Endothelial cell of umbilical vein (primary cell): ENCODE measurements at regions of chr9 and their contacts with region 1.

Region 1: DNA sequence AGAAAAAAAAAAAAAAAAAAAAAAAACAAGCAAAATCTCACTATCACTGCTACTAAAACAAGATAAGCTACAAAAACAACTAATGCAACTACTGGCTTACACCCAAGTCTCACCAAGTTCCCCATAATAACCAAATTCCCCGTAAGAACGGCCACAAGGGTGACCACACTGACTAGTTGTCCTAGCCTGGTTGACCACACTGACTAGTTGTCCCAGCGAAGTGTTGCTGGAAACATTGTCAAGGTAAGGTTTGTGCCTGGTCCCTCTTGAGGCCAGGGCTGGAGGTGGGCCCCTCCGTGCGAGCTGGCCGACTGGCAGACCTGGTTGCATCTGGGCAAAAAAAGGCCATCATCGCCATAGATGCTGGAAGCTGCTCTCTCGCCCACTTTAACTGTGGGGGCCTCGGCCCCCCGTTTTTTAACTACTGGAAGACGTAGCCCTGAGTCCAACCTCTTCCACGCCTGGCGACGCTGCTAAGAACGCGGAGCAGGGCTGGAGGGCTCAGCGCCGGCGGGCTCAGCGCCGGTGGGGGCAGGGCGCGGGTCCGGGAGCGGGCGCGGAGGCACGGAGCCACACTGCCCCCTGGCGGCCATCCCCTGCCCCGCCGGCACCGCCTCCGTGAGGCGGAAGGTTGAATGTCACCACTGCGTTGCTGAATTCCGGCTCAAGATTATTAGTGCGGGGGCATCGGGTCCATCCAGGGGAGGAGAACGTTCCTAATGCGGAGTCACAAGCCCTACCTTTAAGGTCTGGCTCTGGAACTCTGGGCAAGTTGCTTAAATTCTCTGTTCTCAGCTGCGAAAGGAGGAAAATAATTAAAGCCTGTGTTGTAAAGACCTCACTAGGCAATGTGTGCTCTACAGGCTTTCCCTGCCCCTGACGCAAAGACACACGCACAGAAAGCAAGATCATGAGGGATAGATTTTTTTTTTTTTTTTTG is 84.0 kb downstream of the HSD17B3 start:
- DNase-seq: peak; percentile 71
- H3K4me3 ChIP-seq: peak overlapping the region in 2 of 3 experiments; percentile 29 to 41
- H3K27ac ChIP-seq: no peak overlapping the region
- H3K4me1 ChIP-seq: peaks cover 7% of the 10 kb centered on the region
- H3K27me3 ChIP-seq: peaks cover 13 to 18% of the 10 kb centered on the region in 2 experiments
- CTCF ChIP-seq: peak; percentile 90 to 99
- POLR2A ChIP-seq: no peak

Region 2: GRCh38 chr9:94681508-94681907 is 1536.5 kb before region 1 on chr9:
- CTCF ChIA-PET with region 1: interaction called, 17 read pairs
- POLR2A ChIA-PET with region 1: no interaction called
- dilution Hi-C with region 1: no loop called
- intact Hi-C with region 1: loop called (anchors 1 kb)
- DNase-seq: peak; percentile 67
- H3K4me3 ChIP-seq: no peak overlapping the region
- H3K27ac ChIP-seq: no peak overlapping the region
- H3K4me1 ChIP-seq: no peaks in the 10 kb centered on the region
- H3K27me3 ChIP-seq: peaks cover 3 to 4% of the 10 kb centered on the region in 2 experiments
- CTCF ChIP-seq: peak; percentile 68 to 74
- POLR2A ChIP-seq: no peak

Region 3: DNA sequence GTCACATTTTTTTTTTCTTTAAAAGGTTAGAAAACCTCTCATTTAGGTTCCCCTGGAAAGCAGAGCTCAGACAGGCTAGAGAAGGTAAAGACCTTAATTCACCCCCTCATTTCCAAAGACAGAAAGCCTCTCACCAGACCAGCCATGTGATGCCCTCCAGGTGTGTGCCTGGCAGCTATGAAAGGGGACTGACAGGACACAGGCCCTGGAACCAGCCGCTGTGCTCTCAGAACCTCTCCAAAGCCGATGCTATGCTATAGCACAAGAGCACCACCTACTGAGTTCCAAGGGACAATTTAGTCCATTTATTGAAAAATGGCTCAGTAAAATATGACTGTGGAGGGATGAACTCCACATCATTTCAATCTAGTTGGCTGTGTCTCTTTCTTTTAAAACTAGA is 949.3 kb before region 1 on chr9:
- CTCF ChIA-PET with region 1: interaction called, 4 read pairs
- POLR2A ChIA-PET with region 1: no interaction called
- dilution Hi-C with region 1: no loop called
- intact Hi-C with region 1: loop called (anchors 2 kb)
- DNase-seq: peak; percentile 47
- H3K4me3 ChIP-seq: no peak overlapping the region
- H3K27ac ChIP-seq: no peak overlapping the region
- H3K4me1 ChIP-seq: no peaks in the 10 kb centered on the region
- H3K27me3 ChIP-seq: no peaks in the 10 kb centered on the region
- CTCF ChIP-seq: peak; percentile 12 to 37
- POLR2A ChIP-seq: no peak

Region 4: GRCh38 chr9:95510709-95511615 is 707.1 kb before region 1 on chr9:
- CTCF ChIA-PET with region 1: interaction called, 7 read pairs
- POLR2A ChIA-PET with region 1: no interaction called
- dilution Hi-C with region 1: no loop called
- intact Hi-C with region 1: loop called (anchors 1 kb)
- DNase-seq: peak; percentile 91
- H3K4me3 ChIP-seq: peak overlapping the region; percentile 74 to 98 (median 94)
- H3K27ac ChIP-seq: peak overlapping the region; percentile 83
- H3K4me1 ChIP-seq: peaks cover 28% of the 10 kb centered on the region
- H3K27me3 ChIP-seq: peaks cover 0 to 2% of the 10 kb centered on the region in 2 experiments
- CTCF ChIP-seq: no peak
- POLR2A ChIP-seq: peak; percentile 69

Region 5: DNA sequence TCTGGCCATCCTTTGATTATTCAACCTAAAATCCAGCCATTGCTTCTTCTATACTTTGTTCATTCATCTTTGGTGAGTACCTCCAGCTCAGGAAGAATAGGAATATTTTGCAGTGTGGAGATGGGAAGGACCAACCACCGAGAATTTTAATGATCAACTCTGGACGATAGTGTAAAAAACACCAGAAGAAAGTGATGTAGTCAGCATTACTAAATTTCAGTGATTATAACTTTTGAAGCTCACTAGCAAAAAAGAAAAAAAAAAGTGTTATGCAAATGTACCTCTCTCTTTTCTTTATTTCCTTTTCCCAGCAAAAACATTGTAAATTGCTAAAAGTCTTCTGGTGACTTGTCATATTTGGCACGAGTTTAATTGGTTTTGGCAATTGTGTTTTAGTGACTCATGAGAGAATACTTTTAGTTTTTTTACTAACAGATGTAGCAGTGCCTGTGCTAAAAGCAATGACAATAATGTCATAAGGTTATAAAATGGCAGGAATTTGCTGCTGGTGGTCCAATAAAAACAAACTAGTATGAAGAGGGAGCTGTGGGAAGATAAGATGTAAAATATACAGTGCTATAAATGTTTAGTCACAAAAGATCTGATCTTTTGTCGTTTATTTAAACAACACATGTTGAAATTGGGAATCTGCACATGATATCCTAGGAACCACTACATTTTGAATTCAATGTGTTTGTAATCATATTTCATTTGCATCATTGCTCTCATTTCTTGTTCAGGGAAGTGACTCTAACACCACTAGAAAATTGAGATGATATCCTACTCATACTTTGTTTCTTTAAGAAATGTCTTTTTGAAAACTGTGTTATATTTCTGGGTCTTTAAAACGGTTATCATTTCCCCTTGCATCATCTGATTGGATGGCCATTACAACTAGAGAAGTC is 423.8 kb before region 1 on chr9:
- CTCF ChIA-PET with region 1: interaction called, 3 read pairs
- POLR2A ChIA-PET with region 1: no interaction called
- dilution Hi-C with region 1: no loop called
- intact Hi-C with region 1: loop called (anchors 2 kb)
- DNase-seq: peak; percentile 97
- H3K4me3 ChIP-seq: no peak overlapping the region
- H3K27ac ChIP-seq: peak overlapping the region; percentile 92
- H3K4me1 ChIP-seq: peaks cover 22% of the 10 kb centered on the region
- H3K27me3 ChIP-seq: no peaks in the 10 kb centered on the region
- CTCF ChIP-seq: no peak
- POLR2A ChIP-seq: peak; percentile 54

Region 6: GRCh38 chr9:96061293-96061987 is 156.6 kb before region 1 on chr9:
- CTCF ChIA-PET with region 1: interaction called, 9 read pairs
- POLR2A ChIA-PET with region 1: no interaction called
- dilution Hi-C with region 1: no loop called
- intact Hi-C with region 1: loop called (anchors 1 kb)
- DNase-seq: peak; percentile 65
- H3K4me3 ChIP-seq: no peak overlapping the region
- H3K27ac ChIP-seq: no peak overlapping the region
- H3K4me1 ChIP-seq: peaks cover 9% of the 10 kb centered on the region
- H3K27me3 ChIP-seq: no peaks in the 10 kb centered on the region
- CTCF ChIP-seq: peak; percentile 55 to 57
- POLR2A ChIP-seq: no peak

Region 7: GRCh38 chr9:96317335-96317980 is 99.4 kb after region 1 on chr9:
- CTCF ChIA-PET with region 1: interaction called, 26 read pairs
- POLR2A ChIA-PET with region 1: interaction called, 6 read pairs
- dilution Hi-C with region 1: no loop called
- intact Hi-C with region 1: loop called (anchors 2 kb)
- DNase-seq: peak; percentile 57
- H3K4me3 ChIP-seq: no peak overlapping the region
- H3K27ac ChIP-seq: no peak overlapping the region
- H3K4me1 ChIP-seq: no peaks in the 10 kb centered on the region
- H3K27me3 ChIP-seq: no peaks in the 10 kb centered on the region
- CTCF ChIP-seq: peak; percentile 69 to 85
- POLR2A ChIP-seq: no peak

Region 8: DNA sequence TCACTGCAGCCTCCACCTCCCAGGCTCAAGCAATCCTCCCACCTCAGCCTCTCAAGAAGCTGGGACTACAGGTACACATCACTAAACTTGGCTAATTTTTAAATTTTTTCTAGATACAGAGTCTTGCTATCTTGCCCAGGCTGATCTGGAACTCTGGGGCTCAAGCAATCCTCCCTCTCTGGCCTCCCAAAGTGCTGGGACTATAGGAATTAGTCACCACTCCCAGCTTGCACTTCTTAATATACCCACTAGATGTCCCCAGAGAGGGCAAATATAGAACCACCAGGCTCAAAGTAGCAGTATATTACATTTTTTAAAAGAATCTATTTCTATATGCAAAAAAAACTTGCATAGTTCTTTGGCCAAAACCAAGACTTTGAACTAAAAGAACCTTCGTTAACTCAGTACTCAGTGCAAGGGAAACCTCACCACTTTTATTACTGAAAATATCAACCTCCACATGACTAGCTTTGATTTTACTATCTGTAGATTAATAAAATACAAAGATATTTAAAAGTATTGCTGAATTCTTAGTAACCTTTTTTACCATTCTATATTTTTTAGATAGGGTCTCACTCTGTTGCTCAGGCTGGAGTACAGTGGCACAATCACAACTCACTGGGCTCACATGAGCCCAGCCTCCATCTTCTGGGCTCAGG is 109.8 kb after region 1 on chr9:
- CTCF ChIA-PET with region 1: no interaction called
- POLR2A ChIA-PET with region 1: no interaction called
- dilution Hi-C with region 1: no loop called
- intact Hi-C with region 1: no loop called
- DNase-seq: peak; percentile 74
- H3K4me3 ChIP-seq: no peak overlapping the region
- H3K27ac ChIP-seq: no peak overlapping the region
- H3K4me1 ChIP-seq: peaks cover 7% of the 10 kb centered on the region
- H3K27me3 ChIP-seq: no peaks in the 10 kb centered on the region
- CTCF ChIP-seq: peak; percentile 63 to 69
- POLR2A ChIP-seq: no peak